ENCODE measurements at regions of chr21 and their contacts with region 1.

Region 1: GRCh38 chr21:39388038-39388810 is 39.3 kb upstream of the HMGN1 start:
- DNase-seq: peak; percentile 92
- H3K4me3 Mint-ChIP-seq: peak overlapping the region; percentile 73
- H3K27ac Mint-ChIP-seq: peak overlapping the region; percentile 90
- H3K4me1 Mint-ChIP-seq: peaks cover 46% of the 10 kb centered on the region
- H3K27me3 Mint-ChIP-seq: no peaks in the 10 kb centered on the region

Region 2: GRCh38 chr21:39281207-39281606 is 107.0 kb before region 1 on chr21:
- CTCF ChIA-PET with region 1: no interaction called
- DNase-seq: no peak
- H3K4me3 Mint-ChIP-seq: no peak overlapping the region
- H3K27ac Mint-ChIP-seq: no peak overlapping the region
- H3K4me1 Mint-ChIP-seq: no peaks in the 10 kb centered on the region
- H3K27me3 Mint-ChIP-seq: no peaks in the 10 kb centered on the region

Region 3: GRCh38 chr21:39348355-39349210 is 39.6 kb before region 1 on chr21 and contains the start of gene HMGN1:
- CTCF ChIA-PET with region 1: interaction called, 13 read pairs
- DNase-seq: peak; percentile 91
- H3K4me3 Mint-ChIP-seq: peak within 1 kb of the TSS; percentile 98
- H3K27ac Mint-ChIP-seq: peak within 1 kb of the TSS; percentile 99
- H3K4me1 Mint-ChIP-seq: peaks cover 43% of the 10 kb centered on the region
- H3K27me3 Mint-ChIP-seq: peaks cover 3% of the 10 kb centered on the region

Region 4: GRCh38 chr21:39373644-39374043 is 14.6 kb before region 1 on chr21:
- CTCF ChIA-PET with region 1: interaction called, 13 read pairs
- DNase-seq: no peak
- H3K4me3 Mint-ChIP-seq: no peak overlapping the region
- H3K27ac Mint-ChIP-seq: no peak overlapping the region
- H3K4me1 Mint-ChIP-seq: no peaks in the 10 kb centered on the region
- H3K27me3 Mint-ChIP-seq: peaks cover 42% of the 10 kb centered on the region

Region 5: GRCh38 chr21:39430457-39430856 is 42.2 kb after region 1 on chr21:
- CTCF ChIA-PET with region 1: no interaction called
- DNase-seq: no peak
- H3K4me3 Mint-ChIP-seq: no peak overlapping the region
- H3K27ac Mint-ChIP-seq: no peak overlapping the region
- H3K4me1 Mint-ChIP-seq: no peaks in the 10 kb centered on the region
- H3K27me3 Mint-ChIP-seq: peaks cover 9% of the 10 kb centered on the region

Measured in activated naive CD4-positive, alpha-beta T cell treated with anti-CD3 and anti-CD28 coated beads, Interleukin-2, amount 10 ng/mL, durations not matched to agents 7 days and 5 days (primary cell).